ENCODE measurements at regions of chr1 and their contacts with region 1.

Region 1: GRCh38 chr1:54950369-54951163 is 29.9 kb upstream of the TMEM61 start:
- DNase-seq: peak; percentile 66
- H3K4me3 Mint-ChIP-seq: no peak overlapping the region
- H3K27ac Mint-ChIP-seq: no peak overlapping the region
- H3K4me1 Mint-ChIP-seq: peaks cover 14% of the 10 kb centered on the region
- H3K27me3 Mint-ChIP-seq: peaks cover 28% of the 10 kb centered on the region

Region 2: GRCh38 chr1:54879872-54880271 is 70.7 kb before region 1 on chr1:
- CTCF ChIA-PET with region 1: no interaction called
- DNase-seq: no peak
- H3K4me3 Mint-ChIP-seq: no peak overlapping the region
- H3K27ac Mint-ChIP-seq: no peak overlapping the region
- H3K4me1 Mint-ChIP-seq: peaks cover 35% of the 10 kb centered on the region
- H3K27me3 Mint-ChIP-seq: no peaks in the 10 kb centered on the region

Region 3: DNA sequence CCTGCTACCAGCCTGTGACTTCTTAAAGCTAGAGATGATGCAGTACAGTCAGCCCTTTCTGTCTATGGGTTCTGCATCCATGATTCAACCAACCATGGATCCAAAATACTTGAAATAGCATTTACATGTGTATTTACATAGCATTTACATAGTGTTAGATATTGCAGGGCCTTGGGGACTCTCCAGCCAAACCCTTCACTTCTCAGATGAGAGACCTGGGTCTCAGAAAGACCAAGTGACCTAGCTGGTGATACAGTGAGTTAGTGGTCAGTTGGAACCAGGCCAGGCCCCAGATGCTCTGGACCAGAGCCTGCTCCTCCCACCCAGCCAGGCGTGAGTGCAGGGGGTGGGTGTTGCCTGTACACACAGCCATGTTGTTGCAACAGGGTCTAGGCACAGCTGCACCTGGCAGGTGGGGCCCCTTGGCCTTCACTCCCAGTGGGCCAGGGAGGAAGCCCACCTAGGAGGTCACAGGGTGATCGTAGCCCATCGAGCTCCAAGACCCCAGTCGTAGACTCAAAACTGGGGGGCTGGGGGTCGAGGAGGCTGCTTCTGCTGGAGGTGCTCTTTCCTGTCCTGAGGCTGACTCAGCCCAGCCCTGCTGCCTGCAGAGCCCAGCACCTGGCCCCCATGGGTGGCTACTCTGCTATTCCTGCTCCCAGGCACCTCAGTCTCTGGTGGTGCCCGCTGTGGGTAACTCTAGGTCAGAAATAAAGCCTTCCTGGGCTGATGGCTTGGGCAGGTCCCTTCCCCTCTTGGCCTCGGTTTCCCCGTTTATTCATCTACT is 37.5 kb after region 1 on chr1:
- CTCF ChIA-PET with region 1: interaction called, 23 read pairs
- DNase-seq: no peak
- H3K4me3 Mint-ChIP-seq: no peak overlapping the region
- H3K27ac Mint-ChIP-seq: no peak overlapping the region
- H3K4me1 Mint-ChIP-seq: no peaks in the 10 kb centered on the region
- H3K27me3 Mint-ChIP-seq: peaks cover 26% of the 10 kb centered on the region

Region 4: GRCh38 chr1:54996359-54996868 is 45.8 kb after region 1 on chr1:
- CTCF ChIA-PET with region 1: interaction called, 95 read pairs
- DNase-seq: peak; percentile 82
- H3K4me3 Mint-ChIP-seq: no peak overlapping the region
- H3K27ac Mint-ChIP-seq: peak overlapping the region; percentile 2
- H3K4me1 Mint-ChIP-seq: peaks cover 29% of the 10 kb centered on the region
- H3K27me3 Mint-ChIP-seq: peaks cover 61% of the 10 kb centered on the region

Region 5: GRCh38 chr1:55021965-55022546 is 71.5 kb after region 1 on chr1:
- CTCF ChIA-PET with region 1: interaction called, 50 read pairs
- DNase-seq: peak; percentile 76
- H3K4me3 Mint-ChIP-seq: no peak overlapping the region
- H3K27ac Mint-ChIP-seq: no peak overlapping the region
- H3K4me1 Mint-ChIP-seq: peaks cover 3% of the 10 kb centered on the region
- H3K27me3 Mint-ChIP-seq: peaks cover 31% of the 10 kb centered on the region